T-cell (primary cell): ENCODE measurements at regions of chr19 and their contacts with region 1.

Region 1: DNA sequence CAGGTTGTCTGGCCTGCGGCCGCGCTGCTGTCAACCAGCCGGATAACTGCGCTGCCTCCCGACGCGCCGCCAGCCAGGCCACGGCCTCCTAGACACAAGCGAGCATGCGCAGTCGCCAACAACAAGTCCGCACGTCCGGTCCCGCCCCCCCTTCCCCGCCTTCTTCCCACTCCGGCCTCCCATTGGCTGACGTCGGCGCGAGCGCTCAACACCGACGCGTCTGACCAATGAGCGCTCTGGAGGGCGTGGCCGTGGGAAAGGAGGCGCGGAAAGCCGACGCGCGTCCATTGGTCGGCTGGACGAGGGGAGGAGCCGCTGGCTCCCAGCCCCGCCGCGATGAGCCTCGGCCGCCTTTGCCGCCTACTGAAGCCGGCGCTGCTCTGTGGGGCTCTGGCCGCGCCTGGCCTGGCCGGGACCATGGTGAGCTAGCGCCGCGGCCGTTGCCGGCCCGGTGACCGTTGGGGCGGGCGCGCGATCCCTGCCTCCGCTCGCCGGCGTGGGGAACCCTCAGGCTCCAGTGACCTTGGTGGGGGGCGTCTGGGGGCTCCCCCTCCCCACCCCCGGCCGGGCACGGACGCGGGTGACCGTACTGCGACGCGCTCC is at the start of gene GPX4:
- DNase-seq: peak; percentile 94 to 100 (median 98)
- ATAC-seq: peak; percentile 86 to 90 (median 88)
- H3K4me3 ChIP-seq: peak within 1 kb of the TSS; percentile 74
- H3K4me3 Mint-ChIP-seq: peak within 1 kb of the TSS; percentile 72 to 77 (median 74)
- H3K27ac ChIP-seq: peak within 1 kb of the TSS; percentile 79
- H3K27ac Mint-ChIP-seq: peak within 1 kb of the TSS; percentile 89 to 93
- H3K4me1 ChIP-seq: peaks cover 8 to 70% of the 10 kb centered on the region in 2 experiments
- H3K4me1 Mint-ChIP-seq: peaks cover 30 to 46% (median 39%) of the 10 kb centered on the region in 3 donors
- H3K27me3 ChIP-seq: no peaks in the 10 kb centered on the region
- H3K27me3 Mint-ChIP-seq: no peaks in the 10 kb centered on the region
- total RNA-seq, gene GPX4: 139 to 221 (median 196) TPM

Region 2: GRCh38 chr19:1064661-1065605 is 38.9 kb before region 1 on chr19:
- CTCF ChIA-PET with region 1: no interaction called
- POLR2A ChIA-PET with region 1: interaction called, 7 to 10 read pairs
- DNase-seq: peak in 32 of 35 experiments; percentile 50 to 87 (median 66)
- ATAC-seq: peak; percentile 26 to 36 (median 30)
- H3K4me3 ChIP-seq: peak overlapping the region in 1 of 2 donors; percentile 18
- H3K4me3 Mint-ChIP-seq: peak overlapping the region; percentile 67 to 90 (median 70)
- H3K27ac ChIP-seq: no peak overlapping the region
- H3K27ac Mint-ChIP-seq: peak overlapping the region; percentile 61 to 86
- H3K4me1 ChIP-seq: peaks cover 17 to 59% of the 10 kb centered on the region in 2 experiments
- H3K4me1 Mint-ChIP-seq: peaks cover 32 to 37% (median 37%) of the 10 kb centered on the region in 3 donors
- H3K27me3 ChIP-seq: no peaks in the 10 kb centered on the region
- H3K27me3 Mint-ChIP-seq: no peaks in the 10 kb centered on the region

Region 3: GRCh38 chr19:1122972-1123363 is 19.2 kb after region 1 on chr19:
- CTCF ChIA-PET with region 1: no interaction called
- POLR2A ChIA-PET with region 1: no interaction called
- DNase-seq: peak in 1 of 35 experiments; percentile 20
- ATAC-seq: no peak
- H3K4me3 ChIP-seq: no peak overlapping the region
- H3K4me3 Mint-ChIP-seq: no peak overlapping the region
- H3K27ac ChIP-seq: no peak overlapping the region
- H3K27ac Mint-ChIP-seq: no peak overlapping the region
- H3K4me1 ChIP-seq: peaks cover 0 to 37% of the 10 kb centered on the region in 2 experiments
- H3K4me1 Mint-ChIP-seq: peaks cover 0 to 9% (median 6%) of the 10 kb centered on the region in 3 donors
- H3K27me3 ChIP-seq: no peaks in the 10 kb centered on the region
- H3K27me3 Mint-ChIP-seq: no peaks in the 10 kb centered on the region